Heart left ventricle (tissue), 16 donors: ENCODE measurements at regions of chr9 and their contacts with region 1.

Region 1: GRCh38 chr9:130940693-130941576 is 1.9 kb upstream of the FIBCD1 start:
- DNase-seq: peak in 4 of 5 donors; percentile 51 to 64 (median 60)
- ATAC-seq: peak; percentile 59 to 78 (median 68)
- H3K4me3 ChIP-seq: no peak overlapping the region
- H3K27ac ChIP-seq: no peak overlapping the region
- H3K4me1 ChIP-seq: peaks cover 0 to 30% (median 16%) of the 10 kb centered on the region in 12 donors
- H3K27me3 ChIP-seq: peaks cover 37 to 71% (median 52%) of the 10 kb centered on the region in 9 donors
- CTCF ChIP-seq: peak; percentile 75 to 89 (median 80)
- POLR2A ChIP-seq: peak in 1 of 2 donors; percentile 36

Region 2: GRCh38 chr9:130701056-130702022 is 239.6 kb before region 1 on chr9:
- intact Hi-C with region 1: loop called (anchors 2 to 5 kb)
- DNase-seq: peak; percentile 80 to 89 (median 82)
- ATAC-seq: peak; percentile 90 to 96 (median 92)
- H3K4me3 ChIP-seq: no peak overlapping the region
- H3K27ac ChIP-seq: peak overlapping the region in 4 of 12 donors; percentile 3 to 50 (median 15)
- H3K4me1 ChIP-seq: peaks cover 0 to 17% (median 8%) of the 10 kb centered on the region in 12 donors
- H3K27me3 ChIP-seq: no peaks in the 10 kb centered on the region
- CTCF ChIP-seq: peak; percentile 90 to 97 (median 93)
- POLR2A ChIP-seq: no peak

Region 3: GRCh38 chr9:130707225-130707976 is 233.5 kb before region 1 on chr9:
- intact Hi-C with region 1: loop called in 9 of 10 experiments (anchors 2 to 5 kb)
- DNase-seq: peak in 3 of 5 donors; percentile 61 to 77 (median 71)
- ATAC-seq: peak in 1 of 4 donors; percentile 27
- H3K4me3 ChIP-seq: no peak overlapping the region
- H3K27ac ChIP-seq: no peak overlapping the region
- H3K4me1 ChIP-seq: peaks cover 0 to 9% (median 0%) of the 10 kb centered on the region in 12 donors
- H3K27me3 ChIP-seq: no peaks in the 10 kb centered on the region
- CTCF ChIP-seq: peak; percentile 65 to 85 (median 82)
- POLR2A ChIP-seq: no peak

Region 4: DNA sequence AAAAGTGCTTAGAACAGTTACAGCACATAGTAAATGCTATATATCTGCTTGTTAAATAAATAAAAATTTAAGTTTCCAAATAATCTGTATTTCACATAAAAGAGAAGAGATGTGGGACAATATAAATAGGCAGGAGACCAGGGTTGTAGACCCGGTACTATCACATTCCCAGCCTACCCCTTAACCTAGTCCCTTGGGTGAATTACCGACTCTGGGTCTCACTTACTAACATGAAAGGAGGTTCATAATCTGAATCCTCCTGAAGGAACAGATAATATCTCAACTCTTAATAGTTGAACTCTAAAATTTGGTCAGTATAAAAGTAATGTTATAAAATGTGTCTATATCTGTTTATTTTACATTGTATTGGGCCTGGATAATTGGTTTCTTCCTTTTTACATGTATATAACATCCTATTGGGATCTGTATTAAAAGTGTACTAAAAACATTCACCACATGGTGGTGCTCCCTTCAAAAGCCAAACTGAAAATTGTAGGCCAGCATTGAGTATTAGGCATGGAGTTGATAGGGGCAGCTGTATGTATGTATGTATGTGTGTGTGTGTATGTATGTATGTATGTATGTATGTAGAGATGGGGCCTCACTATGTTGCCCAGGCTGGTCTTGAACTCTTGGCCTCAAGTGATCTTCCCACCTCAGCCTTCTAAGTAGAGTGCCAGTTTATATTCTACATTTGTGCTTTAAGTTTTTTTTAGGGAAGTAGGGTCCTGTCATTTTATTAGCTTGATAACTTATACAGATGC is 170.1 kb before region 1 on chr9:
- intact Hi-C with region 1: loop called in 7 of 10 experiments (anchors 5 to 10 kb)
- DNase-seq: no peak
- ATAC-seq: peak; percentile 38 to 77 (median 76)
- H3K4me3 ChIP-seq: no peak overlapping the region
- H3K27ac ChIP-seq: no peak overlapping the region
- H3K4me1 ChIP-seq: peaks cover 0 to 36% (median 20%) of the 10 kb centered on the region in 12 donors
- H3K27me3 ChIP-seq: no peaks in the 10 kb centered on the region
- CTCF ChIP-seq: peak; percentile 49 to 80 (median 68)
- POLR2A ChIP-seq: peak in 1 of 2 donors; percentile 25

Region 5: GRCh38 chr9:130866474-130866965 is 74.4 kb before region 1 on chr9:
- intact Hi-C with region 1: loop called in 8 of 10 experiments (anchors 2 kb)
- DNase-seq: peak in 4 of 5 donors; percentile 61 to 72 (median 66)
- ATAC-seq: peak; percentile 29 to 50 (median 38)
- H3K4me3 ChIP-seq: no peak overlapping the region
- H3K27ac ChIP-seq: peak overlapping the region in 1 of 12 donors; percentile 20
- H3K4me1 ChIP-seq: peaks cover 3 to 55% (median 28%) of the 10 kb centered on the region in 12 donors
- H3K27me3 ChIP-seq: no peaks in the 10 kb centered on the region
- CTCF ChIP-seq: peak; percentile 66 to 86 (median 79)
- POLR2A ChIP-seq: no peak

Region 6: GRCh38 chr9:130997925-130998596 is 57.1 kb after region 1 on chr9:
- intact Hi-C with region 1: loop called in 3 of 10 experiments (anchors 2 to 5 kb)
- DNase-seq: peak; percentile 54 to 87 (median 70)
- ATAC-seq: peak; percentile 49 to 89 (median 81)
- H3K4me3 ChIP-seq: no peak overlapping the region
- H3K27ac ChIP-seq: no peak overlapping the region
- H3K4me1 ChIP-seq: peaks cover 0 to 13% (median 0%) of the 10 kb centered on the region in 12 donors
- H3K27me3 ChIP-seq: peaks cover 0 to 36% (median 6%) of the 10 kb centered on the region in 9 donors
- CTCF ChIP-seq: peak; percentile 53 to 75 (median 64)
- POLR2A ChIP-seq: no peak